GM12878 (cell line): ENCODE measurements at regions of chr4 and their contacts with region 1.

Region 1: DNA sequence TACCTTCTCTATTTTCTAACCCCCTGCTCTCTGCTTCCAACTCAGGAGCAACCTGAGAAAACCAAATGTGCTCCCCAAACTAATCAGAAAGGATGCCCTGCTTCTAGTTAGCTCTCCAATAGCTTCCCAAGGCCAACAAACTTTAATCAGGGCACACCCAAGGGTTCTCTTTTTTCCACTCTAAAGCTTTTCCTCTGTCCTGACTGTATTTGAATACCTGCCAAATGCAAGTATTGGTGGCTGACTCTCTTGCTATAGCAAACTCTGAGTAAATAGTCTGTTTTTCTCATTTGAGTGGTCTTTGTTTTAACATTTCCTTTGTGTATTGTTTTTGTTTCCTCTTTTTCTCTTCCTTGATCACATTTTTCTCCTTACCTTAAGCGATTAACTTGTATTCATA is 52.5 kb downstream of the GBA3 start:
- DNase-seq: no peak
- ATAC-seq: peak; percentile 5
- H3K4me3 ChIP-seq: no peak overlapping the region
- H3K27ac ChIP-seq: no peak overlapping the region
- H3K4me1 ChIP-seq: no peaks in the 10 kb centered on the region
- H3K27me3 ChIP-seq: no peaks in the 10 kb centered on the region
- CTCF ChIP-seq: no peak
- EP300 ChIP-seq: no peak
- POLR2A ChIP-seq: no peak
- RAD21 ChIP-seq: no peak

Region 2: DNA sequence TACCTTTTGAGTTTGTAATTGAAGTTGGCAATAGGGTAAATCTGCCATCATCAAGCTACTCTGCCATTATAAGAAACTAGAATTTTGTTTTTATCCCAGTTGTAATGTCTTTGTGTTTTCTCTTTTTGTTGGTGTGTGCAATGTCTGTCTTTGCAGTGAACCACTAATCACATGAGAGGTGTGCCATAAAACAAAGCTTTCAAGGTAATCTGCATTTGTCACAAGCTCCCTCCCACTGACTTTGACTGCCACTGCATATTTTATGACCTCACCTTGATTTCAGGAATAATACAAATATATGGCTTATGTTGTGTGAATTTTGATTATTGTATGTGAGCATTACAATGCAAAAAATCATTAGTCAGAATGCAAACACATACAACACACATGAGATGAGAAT is 61.5 kb before region 1 on chr4:
- CTCF ChIA-PET with region 1: no interaction called
- POLR2A ChIA-PET with region 1: no interaction called
- RAD21 ChIA-PET with region 1: no interaction called
- SMC1A ChIA-PET with region 1: no interaction called
- in situ Hi-C with region 1: no loop called
- intact Hi-C with region 1: no loop called
- DNase-seq: no peak
- ATAC-seq: no peak
- H3K4me3 ChIP-seq: no peak overlapping the region
- H3K27ac ChIP-seq: no peak overlapping the region
- H3K4me1 ChIP-seq: no peaks in the 10 kb centered on the region
- H3K27me3 ChIP-seq: no peaks in the 10 kb centered on the region
- CTCF ChIP-seq: no peak
- EP300 ChIP-seq: no peak
- POLR2A ChIP-seq: no peak
- RAD21 ChIP-seq: no peak

Region 3: GRCh38 chr4:22764183-22764582 is 18.9 kb after region 1 on chr4:
- CTCF ChIA-PET with region 1: interaction called, 30 read pairs
- POLR2A ChIA-PET with region 1: interaction called, 5 read pairs
- RAD21 ChIA-PET with region 1: interaction called, 6 read pairs
- SMC1A ChIA-PET with region 1: interaction called, 77 read pairs
- in situ Hi-C with region 1: no loop called
- intact Hi-C with region 1: loop called (anchors 1 kb)
- DNase-seq: no peak
- ATAC-seq: peak; percentile 65
- H3K4me3 ChIP-seq: no peak overlapping the region
- H3K27ac ChIP-seq: no peak overlapping the region
- H3K4me1 ChIP-seq: no peaks in the 10 kb centered on the region
- H3K27me3 ChIP-seq: no peaks in the 10 kb centered on the region
- CTCF ChIP-seq: no peak
- EP300 ChIP-seq: peak; percentile 63 to 69; a peak in 2 of 4 replicates
- POLR2A ChIP-seq: no peak
- RAD21 ChIP-seq: no peak

Region 4: DNA sequence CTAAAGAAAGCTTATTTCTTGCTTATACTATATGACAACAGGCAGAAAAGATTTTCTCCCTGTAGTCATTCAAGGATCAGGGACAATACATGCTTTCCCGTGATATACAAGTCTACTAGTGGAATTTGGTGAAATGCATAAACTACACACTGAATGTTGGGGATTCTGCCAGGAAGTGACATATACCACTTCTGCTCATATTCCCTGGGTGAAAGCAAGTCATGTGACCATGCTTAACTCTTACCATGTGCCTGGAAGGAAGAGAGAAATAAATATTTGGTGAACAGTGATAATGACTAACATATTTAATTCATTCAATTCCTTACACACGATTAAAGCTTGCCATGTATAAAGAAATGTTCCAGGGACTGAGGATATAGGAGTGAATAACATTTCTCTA is 610.0 kb after region 1 on chr4:
- CTCF ChIA-PET with region 1: no interaction called
- POLR2A ChIA-PET with region 1: no interaction called
- RAD21 ChIA-PET with region 1: no interaction called
- SMC1A ChIA-PET with region 1: no interaction called
- in situ Hi-C with region 1: no loop called
- intact Hi-C with region 1: no loop called
- DNase-seq: no peak
- ATAC-seq: no peak
- H3K4me3 ChIP-seq: no peak overlapping the region
- H3K27ac ChIP-seq: no peak overlapping the region
- H3K4me1 ChIP-seq: no peaks in the 10 kb centered on the region
- H3K27me3 ChIP-seq: no peaks in the 10 kb centered on the region
- CTCF ChIP-seq: no peak
- EP300 ChIP-seq: no peak
- POLR2A ChIP-seq: no peak
- RAD21 ChIP-seq: no peak